ENCODE measurements at regions of chr12 and their contacts with region 1.

Region 1: DNA sequence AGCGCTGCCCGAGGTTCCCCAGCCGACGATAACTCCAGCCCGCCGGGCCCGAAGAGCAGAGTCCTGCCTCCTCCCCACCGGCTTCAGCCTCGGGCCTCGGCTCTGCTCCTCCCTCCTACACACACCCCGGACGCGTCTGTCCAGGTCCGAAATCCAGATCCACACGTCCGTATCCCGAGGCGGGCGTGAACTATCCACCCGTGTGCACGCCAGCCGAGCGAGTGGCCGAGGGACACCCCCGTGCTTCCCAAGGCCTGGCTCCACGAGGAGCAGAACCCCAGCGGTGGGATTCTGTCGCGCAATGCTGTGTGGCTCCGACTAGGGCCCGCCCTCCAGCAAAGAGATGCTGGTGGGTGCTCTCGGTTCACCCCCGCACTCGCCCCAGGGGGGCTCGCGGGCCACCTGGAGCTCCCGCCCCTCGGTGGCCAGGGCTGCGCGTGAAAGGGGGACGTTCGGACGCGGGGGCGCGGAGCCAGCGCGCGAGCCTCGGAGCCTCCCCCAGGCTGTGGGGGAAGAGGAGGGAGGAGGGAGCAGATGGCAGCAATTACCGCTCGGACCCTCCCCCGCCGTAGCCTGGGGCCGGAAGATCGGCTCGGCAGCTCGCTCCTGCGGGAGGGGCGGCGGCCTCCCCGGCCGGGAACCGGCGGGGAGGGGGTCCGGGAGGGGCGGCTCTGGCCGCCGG is 18.9 kb upstream of the ANKRD33 start:
- DNase-seq: no peak
- H3K4me3 Mint-ChIP-seq: no peak overlapping the region
- H3K27ac Mint-ChIP-seq: no peak overlapping the region
- H3K4me1 Mint-ChIP-seq: peaks cover 10% of the 10 kb centered on the region
- H3K27me3 Mint-ChIP-seq: peaks cover 48% of the 10 kb centered on the region

Region 2: DNA sequence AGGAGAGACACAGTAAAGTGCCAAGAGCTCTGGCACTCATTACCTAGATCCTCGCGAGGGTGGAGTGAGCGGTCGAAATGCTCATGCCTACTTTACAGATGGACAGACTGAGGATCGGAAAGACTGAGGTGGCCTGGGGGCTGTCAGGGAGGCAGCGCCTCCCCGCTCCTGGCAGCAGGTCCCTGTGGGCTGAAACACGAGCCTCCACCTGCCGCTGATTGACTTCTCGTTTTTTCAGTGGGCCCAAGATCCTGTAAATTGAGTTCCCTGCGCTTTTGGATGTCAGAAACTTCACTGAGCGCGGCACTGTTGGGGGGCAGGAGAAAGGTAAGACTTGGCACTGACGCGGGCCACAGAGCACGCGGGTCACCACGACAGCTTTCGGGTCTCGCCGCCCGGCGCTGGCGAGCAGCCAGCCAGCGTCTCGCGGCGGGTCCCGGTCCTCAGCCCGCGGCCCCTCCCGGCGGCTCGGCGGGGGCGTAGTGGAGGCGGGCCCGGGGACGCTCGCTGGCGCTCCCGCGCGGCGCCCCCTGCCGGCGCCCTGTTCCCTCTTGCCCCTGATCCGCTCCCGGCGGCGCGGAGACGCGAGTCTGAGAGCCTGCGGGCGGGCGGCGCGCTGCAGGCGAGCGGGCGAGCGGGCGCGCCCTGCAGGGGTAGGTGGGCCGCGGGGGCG is 278.5 kb before region 1 on chr12:
- CTCF ChIA-PET with region 1: interaction called, 3 read pairs
- POLR2A ChIA-PET with region 1: no interaction called
- intact Hi-C with region 1: loop called (anchors 10 kb)
- DNase-seq: peak; percentile 82
- H3K4me3 Mint-ChIP-seq: peak overlapping the region; percentile 73
- H3K27ac Mint-ChIP-seq: peak overlapping the region; percentile 29
- H3K4me1 Mint-ChIP-seq: peaks cover 13% of the 10 kb centered on the region
- H3K27me3 Mint-ChIP-seq: peaks cover 48% of the 10 kb centered on the region

Region 3: GRCh38 chr12:52032804-52033502 is 164.0 kb after region 1 on chr12:
- CTCF ChIA-PET with region 1: no interaction called
- POLR2A ChIA-PET with region 1: no interaction called
- intact Hi-C with region 1: no loop called
- DNase-seq: peak; percentile 96
- H3K4me3 Mint-ChIP-seq: peak overlapping the region; percentile 71
- H3K27ac Mint-ChIP-seq: peak overlapping the region; percentile 70
- H3K4me1 Mint-ChIP-seq: peaks cover 37% of the 10 kb centered on the region
- H3K27me3 Mint-ChIP-seq: no peaks in the 10 kb centered on the region

Region 4: GRCh38 chr12:52495389-52495788 is 626.4 kb after region 1 on chr12:
- CTCF ChIA-PET with region 1: no interaction called
- POLR2A ChIA-PET with region 1: no interaction called
- intact Hi-C with region 1: no loop called
- DNase-seq: no peak
- H3K4me3 Mint-ChIP-seq: no peak overlapping the region
- H3K27ac Mint-ChIP-seq: no peak overlapping the region
- H3K4me1 Mint-ChIP-seq: no peaks in the 10 kb centered on the region
- H3K27me3 Mint-ChIP-seq: peaks cover 11% of the 10 kb centered on the region